Activated CD8-positive, alpha-beta T cell treated with anti-CD3 and anti-CD28 coated beads, Interleukin-2, amount 10 ng/mL, durations not matched to agents 7 days and 5 days (primary cell): ENCODE measurements at regions of chr9 and their contacts with region 1.

Region 1: DNA sequence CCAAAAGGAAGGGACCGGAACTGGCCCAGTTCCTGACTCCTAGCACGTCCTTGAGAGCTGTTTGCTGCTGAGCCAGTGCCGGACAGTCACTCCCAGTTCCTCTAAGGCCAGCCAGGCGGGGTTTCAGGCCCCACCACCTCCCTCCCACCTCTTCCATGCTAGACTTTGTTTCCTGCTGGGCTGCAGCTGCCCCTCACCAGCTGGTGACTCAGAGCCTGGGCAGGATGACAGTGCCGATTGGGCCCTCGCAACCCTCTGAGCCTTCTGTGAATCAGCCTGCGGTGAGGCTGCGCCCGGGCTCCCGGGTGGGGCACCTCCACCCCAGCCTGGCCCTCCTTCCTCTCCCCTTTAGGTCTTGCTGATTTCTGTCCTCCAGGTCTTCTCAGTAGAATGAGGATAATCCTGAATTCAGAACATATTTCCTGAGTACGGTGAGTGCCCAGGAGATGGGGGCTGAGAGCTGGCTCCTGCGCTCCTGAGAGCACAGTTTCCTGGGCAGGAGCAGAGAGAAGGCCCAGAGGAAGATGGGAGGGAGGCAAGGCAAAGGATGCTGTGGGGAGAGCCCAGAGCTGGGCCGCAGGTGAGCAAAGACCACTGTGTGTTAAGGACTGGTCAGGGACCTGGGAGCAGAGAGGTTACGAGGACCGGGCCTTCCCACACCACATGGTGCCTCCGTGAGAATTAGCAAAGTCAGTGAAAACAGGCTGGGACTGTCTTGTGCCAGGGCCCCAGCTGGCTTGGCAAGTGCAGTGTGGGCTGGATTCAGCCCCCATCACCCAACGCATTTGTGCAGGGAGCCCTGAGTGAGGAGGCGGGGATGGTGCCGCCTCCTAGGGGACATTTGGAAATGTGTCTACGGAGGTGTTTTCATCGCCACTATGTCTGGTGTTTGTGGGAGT is 32.9 kb upstream of the STXBP1 start:
- DNase-seq: peak; percentile 88
- ATAC-seq: peak; percentile 99
- H3K4me3 Mint-ChIP-seq: peak overlapping the region; percentile 82
- H3K27ac Mint-ChIP-seq: peak overlapping the region; percentile 93
- H3K4me1 Mint-ChIP-seq: peaks cover 58% of the 10 kb centered on the region
- H3K27me3 Mint-ChIP-seq: no peaks in the 10 kb centered on the region

Region 2: GRCh38 chr9:127525401-127526187 is 53.6 kb before region 1 on chr9:
- CTCF ChIA-PET with region 1: interaction called, 13 read pairs
- POLR2A ChIA-PET with region 1: no interaction called
- DNase-seq: peak; percentile 59
- ATAC-seq: peak; percentile 50
- H3K4me3 Mint-ChIP-seq: no peak overlapping the region
- H3K27ac Mint-ChIP-seq: no peak overlapping the region
- H3K4me1 Mint-ChIP-seq: peaks cover 18% of the 10 kb centered on the region
- H3K27me3 Mint-ChIP-seq: no peaks in the 10 kb centered on the region

Region 3: GRCh38 chr9:127684576-127684975 is 105.4 kb after region 1 on chr9:
- CTCF ChIA-PET with region 1: no interaction called
- POLR2A ChIA-PET with region 1: no interaction called
- DNase-seq: no peak
- ATAC-seq: no peak
- H3K4me3 Mint-ChIP-seq: no peak overlapping the region
- H3K27ac Mint-ChIP-seq: no peak overlapping the region
- H3K4me1 Mint-ChIP-seq: no peaks in the 10 kb centered on the region
- H3K27me3 Mint-ChIP-seq: no peaks in the 10 kb centered on the region